Naive thymus-derived CD4-positive, alpha-beta T cell (primary cell): ENCODE measurements at regions of chr3 and their contacts with region 1.

Region 1: DNA sequence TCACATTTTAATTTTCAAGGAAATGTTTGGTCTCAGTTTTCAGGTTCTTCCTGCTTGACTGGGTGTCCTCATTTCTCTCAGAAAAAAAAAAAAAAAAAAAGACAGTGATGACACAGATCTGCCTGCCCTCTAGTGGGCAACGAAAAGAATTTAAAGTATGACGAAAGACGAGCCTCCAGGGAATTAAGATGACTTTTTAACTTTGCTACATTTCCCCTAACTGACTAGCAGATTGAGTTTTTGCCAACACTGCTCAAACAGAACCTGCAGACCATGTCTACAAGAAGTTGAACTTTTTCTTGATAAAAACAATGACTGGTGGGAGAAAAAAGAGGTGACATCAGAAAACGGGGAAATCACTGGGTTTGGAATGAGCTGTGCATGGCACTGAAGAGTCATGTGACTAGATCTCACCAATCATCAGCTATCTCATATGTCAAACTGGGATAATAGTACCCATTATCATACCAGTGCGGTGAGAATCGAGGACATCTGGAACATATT is 40.8 kb downstream of the EOMES start:
- DNase-seq: peak in 7 of 9 donors; percentile 23 to 74 (median 64)
- ATAC-seq: peak; percentile 89
- H3K4me3 ChIP-seq: no peak overlapping the region
- H3K4me3 Mint-ChIP-seq: peak overlapping the region in 9 of 10 donors; percentile 25 to 83 (median 66)
- H3K27ac ChIP-seq: no peak overlapping the region
- H3K27ac Mint-ChIP-seq: peak overlapping the region in 5 of 9 donors; percentile 3 to 77 (median 53)
- H3K4me1 ChIP-seq: no peaks in the 10 kb centered on the region
- H3K4me1 Mint-ChIP-seq: peaks cover 6 to 15% (median 10%) of the 10 kb centered on the region in 7 donors
- H3K27me3 ChIP-seq: no peaks in the 10 kb centered on the region
- H3K27me3 Mint-ChIP-seq: peaks cover 0 to 21% (median 4%) of the 10 kb centered on the region in 5 donors

Region 2: DNA sequence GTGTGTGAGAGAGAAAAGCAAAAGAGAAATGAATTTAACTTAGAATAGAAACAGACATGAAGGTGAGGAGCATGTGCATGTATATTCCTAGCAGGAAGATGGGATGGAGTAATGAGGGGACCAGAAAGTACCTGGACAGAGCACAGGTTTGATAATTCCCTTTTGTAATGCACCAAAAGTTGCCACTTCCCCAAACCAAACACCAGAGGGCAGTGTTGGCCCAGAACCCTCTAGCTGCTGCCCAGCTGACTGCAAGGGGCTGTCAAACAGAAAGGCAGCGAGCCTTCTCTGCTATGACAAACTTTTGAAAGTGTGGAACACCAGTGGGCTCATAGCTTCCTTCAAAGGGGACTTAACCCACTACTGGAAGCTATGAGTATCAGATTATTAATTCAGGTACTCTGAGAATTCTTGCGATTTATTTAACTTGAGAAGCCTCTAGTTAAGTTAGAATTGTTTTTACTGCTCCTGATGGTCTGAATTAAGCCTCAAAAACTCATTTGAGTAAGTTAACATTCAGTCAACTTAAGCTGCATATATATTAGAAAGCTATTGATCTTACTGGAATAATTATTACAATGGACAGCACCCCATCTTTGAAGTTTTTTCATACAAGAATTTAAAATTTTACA is 547.0 kb before region 1 on chr3:
- CTCF ChIA-PET with region 1: interaction called, 3 read pairs
- POLR2A ChIA-PET with region 1: no interaction called
- intact Hi-C with region 1: loop called in 1 of 2 experiments (anchors 1 kb)
- DNase-seq: peak; percentile 9 to 56 (median 43)
- ATAC-seq: peak; percentile 83
- H3K4me3 ChIP-seq: no peak overlapping the region
- H3K4me3 Mint-ChIP-seq: no peak overlapping the region
- H3K27ac ChIP-seq: no peak overlapping the region
- H3K27ac Mint-ChIP-seq: no peak overlapping the region
- H3K4me1 ChIP-seq: no peaks in the 10 kb centered on the region
- H3K4me1 Mint-ChIP-seq: no peaks in the 10 kb centered on the region
- H3K27me3 ChIP-seq: peaks cover 0 to 3% of the 10 kb centered on the region in 2 donors
- H3K27me3 Mint-ChIP-seq: peaks cover 0 to 11% (median 0%) of the 10 kb centered on the region in 5 donors

Region 3: GRCh38 chr3:27312044-27312668 is 369.1 kb before region 1 on chr3:
- CTCF ChIA-PET with region 1: interaction called, 17 read pairs
- POLR2A ChIA-PET with region 1: no interaction called
- intact Hi-C with region 1: loop called (anchors 1 kb)
- DNase-seq: peak in 7 of 9 donors; percentile 18 to 61 (median 44)
- ATAC-seq: peak; percentile 70
- H3K4me3 ChIP-seq: no peak overlapping the region
- H3K4me3 Mint-ChIP-seq: no peak overlapping the region
- H3K27ac ChIP-seq: no peak overlapping the region
- H3K27ac Mint-ChIP-seq: no peak overlapping the region
- H3K4me1 ChIP-seq: no peaks in the 10 kb centered on the region
- H3K4me1 Mint-ChIP-seq: peaks cover 0 to 4% (median 0%) of the 10 kb centered on the region in 7 donors
- H3K27me3 ChIP-seq: no peaks in the 10 kb centered on the region
- H3K27me3 Mint-ChIP-seq: peaks cover 0 to 20% (median 8%) of the 10 kb centered on the region in 5 donors

Region 4: GRCh38 chr3:27357665-27358258 is 323.5 kb before region 1 on chr3:
- CTCF ChIA-PET with region 1: interaction called, 4 read pairs
- POLR2A ChIA-PET with region 1: no interaction called
- intact Hi-C with region 1: loop called (anchors 1 kb)
- DNase-seq: peak in 8 of 9 donors; percentile 19 to 56 (median 41)
- ATAC-seq: peak; percentile 93
- H3K4me3 ChIP-seq: no peak overlapping the region
- H3K4me3 Mint-ChIP-seq: no peak overlapping the region
- H3K27ac ChIP-seq: no peak overlapping the region
- H3K27ac Mint-ChIP-seq: no peak overlapping the region
- H3K4me1 ChIP-seq: peaks cover 13 to 18% of the 10 kb centered on the region in 2 donors
- H3K4me1 Mint-ChIP-seq: peaks cover 0 to 31% (median 25%) of the 10 kb centered on the region in 7 donors
- H3K27me3 ChIP-seq: no peaks in the 10 kb centered on the region
- H3K27me3 Mint-ChIP-seq: peaks cover 0 to 20% (median 0%) of the 10 kb centered on the region in 5 donors

Region 5: DNA sequence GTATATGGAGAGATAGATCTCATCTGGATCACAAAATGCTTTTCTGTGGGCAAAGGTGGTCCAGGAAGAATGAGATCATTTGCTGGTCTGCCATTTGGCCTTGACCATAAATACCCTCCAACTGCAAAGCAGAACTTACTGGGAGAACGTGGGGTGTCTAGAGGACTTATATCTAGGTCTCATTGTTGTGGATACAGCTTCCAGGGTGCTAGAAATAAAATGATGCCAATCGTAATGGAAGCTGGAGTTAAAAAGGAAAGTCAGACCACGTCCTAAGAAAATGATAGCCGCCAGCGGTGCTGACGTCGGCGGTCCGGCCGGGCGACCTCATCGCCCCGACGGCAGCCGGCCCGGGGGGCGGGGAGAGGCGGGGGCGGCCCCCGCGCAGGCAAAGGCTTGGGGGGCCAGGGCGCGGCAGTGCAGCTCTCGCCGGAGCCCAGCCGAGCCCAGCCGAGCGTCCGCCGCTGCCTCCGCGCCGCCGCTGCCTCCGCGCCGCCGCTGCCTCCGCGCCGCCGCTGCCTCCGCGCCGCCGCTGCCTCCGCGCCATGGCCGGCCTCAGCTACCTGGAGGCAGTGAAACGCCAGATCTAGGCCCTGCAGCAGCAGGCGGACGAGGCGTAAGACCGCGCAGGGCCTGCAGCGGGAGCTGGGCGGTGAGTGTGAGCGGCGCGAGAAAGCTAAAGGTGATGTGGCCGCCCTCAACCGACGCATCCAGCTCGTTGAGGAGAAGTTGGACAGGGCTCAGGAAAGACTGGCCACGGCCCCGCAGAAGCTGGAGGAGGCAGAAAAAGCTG is 48.7 kb before region 1 on chr3:
- CTCF ChIA-PET with region 1: interaction called, 5 read pairs
- POLR2A ChIA-PET with region 1: no interaction called
- intact Hi-C with region 1: loop called (anchors 2 kb)
- DNase-seq: peak; percentile 21 to 56 (median 44)
- ATAC-seq: peak; percentile 92
- H3K4me3 ChIP-seq: peak overlapping the region; percentile 77
- H3K4me3 Mint-ChIP-seq: peak overlapping the region; percentile 92 to 99 (median 95)
- H3K27ac ChIP-seq: peak overlapping the region; percentile 70
- H3K27ac Mint-ChIP-seq: peak overlapping the region; percentile 88 to 99 (median 93)
- H3K4me1 ChIP-seq: peaks cover 0 to 18% of the 10 kb centered on the region in 2 donors
- H3K4me1 Mint-ChIP-seq: peaks cover 11 to 31% (median 29%) of the 10 kb centered on the region in 7 donors
- H3K27me3 ChIP-seq: no peaks in the 10 kb centered on the region
- H3K27me3 Mint-ChIP-seq: no peaks in the 10 kb centered on the region

Region 6: DNA sequence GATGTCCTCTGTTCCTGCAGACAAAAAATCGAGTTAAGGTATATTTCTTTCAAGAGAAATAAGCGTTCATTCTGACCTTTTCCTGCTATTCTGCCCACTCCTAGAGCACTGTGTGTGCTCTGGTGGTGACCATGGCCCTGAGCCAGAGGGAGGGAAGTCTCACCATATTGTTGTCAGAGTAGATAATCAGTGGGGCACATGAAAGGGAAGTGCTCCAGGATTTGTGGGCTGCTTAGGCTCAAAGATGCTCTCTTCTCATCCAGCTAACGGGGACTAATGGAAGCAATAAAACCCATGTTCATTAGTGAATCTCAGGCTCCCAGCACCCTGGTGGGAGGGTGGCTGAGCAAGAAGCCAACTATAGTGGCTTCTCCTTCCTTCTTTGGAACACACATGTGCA is 111.6 kb after region 1 on chr3:
- CTCF ChIA-PET with region 1: no interaction called
- POLR2A ChIA-PET with region 1: no interaction called
- intact Hi-C with region 1: no loop called
- DNase-seq: no peak
- ATAC-seq: no peak
- H3K4me3 ChIP-seq: no peak overlapping the region
- H3K4me3 Mint-ChIP-seq: no peak overlapping the region
- H3K27ac ChIP-seq: no peak overlapping the region
- H3K27ac Mint-ChIP-seq: no peak overlapping the region
- H3K4me1 ChIP-seq: no peaks in the 10 kb centered on the region
- H3K4me1 Mint-ChIP-seq: peaks cover 0 to 16% (median 4%) of the 10 kb centered on the region in 7 donors
- H3K27me3 ChIP-seq: no peaks in the 10 kb centered on the region
- H3K27me3 Mint-ChIP-seq: no peaks in the 10 kb centered on the region